PC-3 (cell line): ENCODE measurements at regions of chr15 and their contacts with region 1.

Region 1: DNA sequence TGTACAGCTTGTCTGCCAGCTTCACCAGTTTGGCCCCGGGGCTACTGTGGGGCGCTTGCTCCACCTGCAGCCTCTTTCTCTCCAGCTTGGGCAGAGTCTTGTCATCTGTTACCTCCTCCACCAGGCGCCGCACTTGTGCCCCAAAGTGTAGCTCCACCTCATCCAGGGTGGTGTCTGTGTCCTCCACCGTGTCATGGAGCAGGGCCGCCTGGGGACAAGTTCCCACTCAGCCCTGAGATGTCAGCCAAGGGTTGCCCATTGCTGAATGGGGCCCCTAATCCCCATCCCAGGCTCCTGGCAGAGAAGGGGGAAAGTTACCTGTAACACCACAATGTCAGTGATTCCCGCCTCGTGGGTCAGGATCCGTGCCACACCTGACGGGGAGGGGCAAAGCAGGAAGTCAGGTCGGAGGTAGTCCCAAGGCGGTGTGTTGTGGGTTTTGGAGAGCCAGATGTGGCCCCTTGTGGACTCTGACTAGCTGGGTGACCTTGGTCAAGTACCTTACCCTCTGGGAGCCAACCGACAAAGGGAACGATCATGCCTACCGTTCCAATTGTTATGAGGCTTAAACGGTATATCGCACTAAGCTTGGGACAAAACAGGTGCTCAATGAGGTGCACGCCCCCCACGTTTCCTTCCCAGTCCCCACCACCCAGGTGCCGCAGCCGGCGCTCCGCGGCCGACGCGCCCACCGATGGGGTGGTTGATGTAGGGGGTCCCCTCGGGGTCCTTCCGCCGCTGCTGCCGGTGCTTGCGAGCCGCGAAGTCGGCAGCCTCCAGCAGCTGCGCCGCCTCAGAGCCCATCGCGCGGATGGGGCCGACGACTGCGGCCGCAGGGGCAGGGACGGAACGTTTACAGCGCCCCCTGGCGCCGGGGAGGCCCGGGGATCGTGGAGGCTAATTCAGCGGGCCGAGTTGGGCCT is at the start of gene HDDC3:
- DNase-seq: peak; percentile 88
- ATAC-seq: peak; percentile 51
- H3K4me3 ChIP-seq: peak within 1 kb of the TSS; percentile 87
- H3K27ac ChIP-seq: peak within 1 kb of the TSS; percentile 78
- H3K4me1 ChIP-seq: peaks cover 38% of the 10 kb centered on the region
- H3K27me3 ChIP-seq: no peaks in the 10 kb centered on the region
- CTCF ChIP-seq: peak; percentile 85
- total RNA-seq, gene HDDC3: 18.5 and 19.6 TPM in 2 replicates

Region 2: GRCh38 chr15:90902040-90902839 is 29.8 kb before region 1 on chr15:
- CTCF ChIA-PET with region 1: interaction called, 5 read pairs
- POLR2A ChIA-PET with region 1: interaction called, 3 read pairs
- intact Hi-C with region 1: loop called (anchors 2 kb)
- DNase-seq: peak; percentile 83
- ATAC-seq: peak; percentile 89
- H3K4me3 ChIP-seq: peak overlapping the region; percentile 88
- H3K27ac ChIP-seq: no peak overlapping the region
- H3K4me1 ChIP-seq: peaks cover 13% of the 10 kb centered on the region
- H3K27me3 ChIP-seq: no peaks in the 10 kb centered on the region
- CTCF ChIP-seq: peak; percentile 74

Region 3: DNA sequence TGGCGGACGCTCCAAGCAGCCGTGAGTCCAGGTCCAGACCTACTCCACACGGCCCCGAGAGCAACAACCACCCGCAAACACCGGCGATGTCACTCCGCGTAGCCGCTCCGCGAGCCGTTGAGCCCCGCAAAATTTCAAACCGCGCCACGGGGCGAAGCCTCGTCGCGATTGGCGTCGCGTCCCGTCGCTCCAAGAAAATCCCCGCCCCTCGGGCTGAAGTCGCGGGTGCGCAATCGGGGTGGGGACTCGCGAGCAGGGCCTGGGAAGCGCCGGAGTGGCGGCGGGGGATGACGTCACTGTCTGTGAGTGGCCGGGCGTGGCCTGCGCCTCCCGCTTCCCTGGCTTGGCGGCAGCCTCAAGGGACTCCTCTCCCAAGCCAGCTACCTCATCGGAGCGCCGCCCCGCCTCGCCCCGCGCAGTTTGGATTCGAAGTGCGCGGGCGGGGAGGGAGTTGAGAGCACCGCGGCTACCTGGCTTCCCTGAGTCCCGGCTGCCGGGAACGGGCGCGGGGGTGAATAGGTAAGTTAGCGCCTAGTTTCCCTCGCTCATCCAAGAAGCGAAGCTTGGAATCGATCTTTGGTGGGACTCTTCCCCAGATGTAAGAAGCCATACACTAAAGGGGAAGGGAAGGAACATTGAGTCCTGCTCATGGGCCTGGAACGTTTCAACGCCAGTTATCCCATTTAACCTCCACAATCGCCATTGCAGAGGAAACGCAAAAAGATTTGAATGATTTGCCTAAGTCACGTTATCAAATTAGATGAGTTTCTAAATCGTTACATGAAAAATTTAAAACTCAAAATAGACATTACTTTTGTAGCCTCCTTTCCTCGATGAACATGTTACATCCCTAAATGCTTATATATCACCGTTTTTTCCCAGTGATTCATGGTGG is 62.7 kb after region 1 on chr15 and contains the start of gene PRC1:
- CTCF ChIA-PET with region 1: no interaction called
- POLR2A ChIA-PET with region 1: no interaction called
- intact Hi-C with region 1: loop called (anchors 5 kb)
- DNase-seq: peak; percentile 99
- ATAC-seq: peak; percentile 96
- H3K4me3 ChIP-seq: peak within 1 kb of the TSS; percentile 72
- H3K27ac ChIP-seq: peak within 1 kb of the TSS; percentile 58
- H3K4me1 ChIP-seq: peaks cover 5% of the 10 kb centered on the region; the same call in 1 of the 2 replicates
- H3K27me3 ChIP-seq: no peaks in the 10 kb centered on the region
- CTCF ChIP-seq: no peak
- total RNA-seq, gene PRC1: 236 and 243 TPM in 2 replicates

Region 4: GRCh38 chr15:91032919-91033803 is 101.2 kb after region 1 on chr15:
- CTCF ChIA-PET with region 1: no interaction called
- POLR2A ChIA-PET with region 1: no interaction called
- intact Hi-C with region 1: loop called (anchors 10 kb)
- DNase-seq: peak; percentile 76
- ATAC-seq: peak; percentile 87
- H3K4me3 ChIP-seq: no peak overlapping the region
- H3K27ac ChIP-seq: no peak overlapping the region
- H3K4me1 ChIP-seq: no peaks in the 10 kb centered on the region
- H3K27me3 ChIP-seq: no peaks in the 10 kb centered on the region; the same call in 1 of the 2 replicates
- CTCF ChIP-seq: peak; percentile 61